CD4-positive, alpha-beta memory T cell (primary cell): ENCODE measurements at regions of chr7 and their contacts with region 1.

Region 1: GRCh38 chr7:139645572-139646523 is 122.4 kb downstream of the CLEC2L start:
- DNase-seq: peak; percentile 75 to 79 (median 76)
- H3K4me3 ChIP-seq: no peak overlapping the region
- H3K4me3 Mint-ChIP-seq: peak overlapping the region in 3 of 8 donors; percentile 2 to 68 (median 8)
- H3K27ac ChIP-seq: no peak overlapping the region
- H3K27ac Mint-ChIP-seq: peak overlapping the region in 6 of 7 donors; percentile 7 to 90 (median 82)
- H3K4me1 ChIP-seq: peaks cover 49% of the 10 kb centered on the region
- H3K4me1 Mint-ChIP-seq: peaks cover 35 to 72% (median 53%) of the 10 kb centered on the region in 4 donors
- H3K27me3 ChIP-seq: no peaks in the 10 kb centered on the region
- H3K27me3 Mint-ChIP-seq: no peaks in the 10 kb centered on the region

Region 2: DNA sequence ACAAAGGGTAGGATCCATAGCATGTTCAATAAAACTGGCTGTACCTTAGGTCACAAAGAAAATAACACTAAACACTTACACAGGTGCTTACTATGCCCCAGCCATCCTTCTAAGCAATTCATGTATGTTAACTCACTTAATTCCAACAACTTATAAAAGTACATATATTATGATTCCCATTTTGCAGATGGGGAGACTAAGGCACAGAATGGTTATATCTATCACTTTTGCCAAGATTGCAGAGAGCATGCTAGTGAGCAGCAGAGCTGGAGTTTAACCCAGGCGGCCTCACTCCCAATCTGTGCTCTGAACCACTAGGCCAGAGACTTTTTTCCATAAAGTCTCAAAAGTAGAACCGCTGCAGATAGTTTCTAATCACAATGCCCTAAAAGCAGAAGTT is 433.7 kb before region 1 on chr7:
- CTCF ChIA-PET with region 1: no interaction called
- POLR2A ChIA-PET with region 1: no interaction called
- intact Hi-C with region 1: no loop called
- DNase-seq: no peak
- H3K4me3 ChIP-seq: no peak overlapping the region
- H3K4me3 Mint-ChIP-seq: no peak overlapping the region
- H3K27ac ChIP-seq: no peak overlapping the region
- H3K27ac Mint-ChIP-seq: no peak overlapping the region
- H3K4me1 ChIP-seq: no peaks in the 10 kb centered on the region
- H3K4me1 Mint-ChIP-seq: no peaks in the 10 kb centered on the region
- H3K27me3 ChIP-seq: no peaks in the 10 kb centered on the region
- H3K27me3 Mint-ChIP-seq: peaks cover 2 to 12% of the 10 kb centered on the region in 2 donors

Region 3: GRCh38 chr7:139452958-139453672 is 192.7 kb before region 1 on chr7:
- CTCF ChIA-PET with region 1: no interaction called
- POLR2A ChIA-PET with region 1: no interaction called
- intact Hi-C with region 1: no loop called
- DNase-seq: no peak
- H3K4me3 ChIP-seq: no peak overlapping the region
- H3K4me3 Mint-ChIP-seq: no peak overlapping the region
- H3K27ac ChIP-seq: no peak overlapping the region
- H3K27ac Mint-ChIP-seq: no peak overlapping the region
- H3K4me1 ChIP-seq: no peaks in the 10 kb centered on the region
- H3K4me1 Mint-ChIP-seq: no peaks in the 10 kb centered on the region
- H3K27me3 ChIP-seq: no peaks in the 10 kb centered on the region
- H3K27me3 Mint-ChIP-seq: no peaks in the 10 kb centered on the region

Region 4: GRCh38 chr7:139602143-139602722 is 43.6 kb before region 1 on chr7:
- CTCF ChIA-PET with region 1: interaction called, 35 read pairs
- POLR2A ChIA-PET with region 1: no interaction called
- intact Hi-C with region 1: no loop called
- DNase-seq: peak in 4 of 5 donors; percentile 30 to 38 (median 33)
- H3K4me3 ChIP-seq: no peak overlapping the region
- H3K4me3 Mint-ChIP-seq: no peak overlapping the region
- H3K27ac ChIP-seq: no peak overlapping the region
- H3K27ac Mint-ChIP-seq: no peak overlapping the region
- H3K4me1 ChIP-seq: no peaks in the 10 kb centered on the region
- H3K4me1 Mint-ChIP-seq: no peaks in the 10 kb centered on the region
- H3K27me3 ChIP-seq: no peaks in the 10 kb centered on the region
- H3K27me3 Mint-ChIP-seq: no peaks in the 10 kb centered on the region

Region 5: DNA sequence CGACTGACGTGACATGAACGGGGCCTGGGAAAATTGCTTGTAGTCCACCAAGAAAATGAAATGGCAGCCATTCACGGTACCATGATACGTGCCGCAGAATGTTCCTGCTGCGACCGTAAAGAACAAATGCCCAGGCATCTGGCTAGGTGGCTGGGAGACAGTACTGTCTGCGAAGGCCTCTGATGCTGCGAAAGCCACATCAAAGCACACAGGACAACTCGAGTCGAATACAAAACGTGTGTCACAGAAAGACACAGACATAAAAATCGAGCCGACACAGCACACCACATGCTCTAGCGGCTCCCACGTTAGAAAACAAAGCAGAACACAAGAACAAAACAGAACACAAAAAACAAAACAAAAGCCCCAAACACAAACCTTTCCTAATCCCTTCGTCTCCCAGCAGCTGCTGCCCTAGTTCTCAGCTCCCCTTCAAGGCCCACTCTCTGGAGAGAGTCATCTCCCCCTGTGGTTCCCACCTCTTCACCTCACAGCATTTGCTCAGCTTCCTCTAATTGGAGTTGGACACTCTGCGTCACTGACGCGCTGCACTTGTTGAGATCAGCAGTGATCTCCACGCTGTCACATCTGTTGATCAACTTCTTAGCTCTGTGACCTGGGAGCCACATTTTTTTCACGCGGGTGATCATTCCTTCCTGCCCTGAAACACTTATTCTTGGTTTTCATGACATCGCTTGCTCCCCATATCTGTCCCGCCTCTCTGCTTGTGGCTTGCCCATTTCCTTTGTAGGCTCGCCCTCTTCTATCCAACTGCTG is 10.1 kb before region 1 on chr7:
- CTCF ChIA-PET with region 1: interaction called, 32 read pairs
- POLR2A ChIA-PET with region 1: interaction called, 4 read pairs
- intact Hi-C with region 1: no loop called
- DNase-seq: peak; percentile 69 to 90 (median 85)
- H3K4me3 ChIP-seq: no peak overlapping the region
- H3K4me3 Mint-ChIP-seq: peak overlapping the region; percentile 51 to 88 (median 74)
- H3K27ac ChIP-seq: peak overlapping the region; percentile 36
- H3K27ac Mint-ChIP-seq: peak overlapping the region; percentile 73 to 98 (median 94)
- H3K4me1 ChIP-seq: peaks cover 36% of the 10 kb centered on the region
- H3K4me1 Mint-ChIP-seq: peaks cover 33 to 64% (median 45%) of the 10 kb centered on the region in 4 donors
- H3K27me3 ChIP-seq: no peaks in the 10 kb centered on the region
- H3K27me3 Mint-ChIP-seq: no peaks in the 10 kb centered on the region

Region 6: GRCh38 chr7:139767561-139767982 is 121.7 kb after region 1 on chr7:
- CTCF ChIA-PET with region 1: interaction called, 13 read pairs
- POLR2A ChIA-PET with region 1: interaction called, 9 read pairs
- intact Hi-C with region 1: no loop called
- DNase-seq: peak in 4 of 5 donors; percentile 56 to 67 (median 60)
- H3K4me3 ChIP-seq: peak overlapping the region in 1 of 2 donors; percentile 27
- H3K4me3 Mint-ChIP-seq: peak overlapping the region; percentile 0 to 93 (median 60)
- H3K27ac ChIP-seq: peak overlapping the region; percentile 56
- H3K27ac Mint-ChIP-seq: peak overlapping the region; percentile 84 to 91 (median 88)
- H3K4me1 ChIP-seq: peaks cover 58% of the 10 kb centered on the region
- H3K4me1 Mint-ChIP-seq: peaks cover 64 to 88% (median 77%) of the 10 kb centered on the region in 4 donors
- H3K27me3 ChIP-seq: no peaks in the 10 kb centered on the region
- H3K27me3 Mint-ChIP-seq: no peaks in the 10 kb centered on the region

Region 7: GRCh38 chr7:139995017-139995931 is 349.4 kb after region 1 on chr7:
- CTCF ChIA-PET with region 1: interaction called, 203 read pairs
- POLR2A ChIA-PET with region 1: no interaction called
- intact Hi-C with region 1: no loop called
- DNase-seq: no peak
- H3K4me3 ChIP-seq: no peak overlapping the region
- H3K4me3 Mint-ChIP-seq: no peak overlapping the region
- H3K27ac ChIP-seq: no peak overlapping the region
- H3K27ac Mint-ChIP-seq: no peak overlapping the region
- H3K4me1 ChIP-seq: no peaks in the 10 kb centered on the region
- H3K4me1 Mint-ChIP-seq: no peaks in the 10 kb centered on the region
- H3K27me3 ChIP-seq: no peaks in the 10 kb centered on the region
- H3K27me3 Mint-ChIP-seq: no peaks in the 10 kb centered on the region

Region 8: DNA sequence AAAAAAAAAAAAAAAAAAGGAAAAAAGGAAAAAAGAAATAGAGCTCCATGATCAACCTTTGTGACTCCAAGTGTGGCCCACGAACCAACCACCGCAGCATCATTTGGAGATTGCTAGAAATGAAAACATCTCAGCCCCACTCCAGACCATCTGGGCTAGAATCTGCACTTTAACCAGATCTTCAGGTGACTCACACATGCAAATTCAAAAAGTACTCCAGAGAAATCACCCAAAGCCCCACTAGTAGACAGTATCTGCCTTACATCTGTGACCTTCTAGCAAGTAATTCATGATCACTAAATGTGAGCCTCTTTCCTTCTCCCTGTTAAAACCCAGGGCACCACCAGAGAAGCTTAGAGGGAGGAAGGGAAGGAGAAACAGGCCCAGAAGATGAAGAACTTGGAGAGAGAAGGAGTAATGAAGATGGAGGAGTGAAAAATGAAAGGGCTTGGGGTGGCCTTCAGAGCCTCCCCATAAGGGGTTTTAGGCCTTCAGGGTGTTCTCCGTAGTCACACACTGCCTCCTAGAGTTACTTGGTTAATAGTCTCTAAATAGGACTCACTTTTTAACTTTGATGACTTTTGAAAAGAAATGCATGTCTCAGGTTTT is 658.4 kb after region 1 on chr7:
- CTCF ChIA-PET with region 1: interaction called, 16 read pairs
- POLR2A ChIA-PET with region 1: no interaction called
- intact Hi-C with region 1: loop called (anchors 1 kb)
- DNase-seq: peak; percentile 39 to 67 (median 56)
- H3K4me3 ChIP-seq: no peak overlapping the region
- H3K4me3 Mint-ChIP-seq: no peak overlapping the region
- H3K27ac ChIP-seq: no peak overlapping the region
- H3K27ac Mint-ChIP-seq: peak overlapping the region in 5 of 7 donors; percentile 35 to 72 (median 63)
- H3K4me1 ChIP-seq: no peaks in the 10 kb centered on the region
- H3K4me1 Mint-ChIP-seq: peaks cover 4 to 7% (median 5%) of the 10 kb centered on the region in 4 donors
- H3K27me3 ChIP-seq: no peaks in the 10 kb centered on the region
- H3K27me3 Mint-ChIP-seq: peaks cover under 1% of the 10 kb centered on the region in 2 donors